Motor neuron (in vitro differentiated cells): ENCODE measurements at regions of chr14 and their contacts with region 1.

Region 1: GRCh38 chr14:104639889-104640548 is 35.4 kb upstream of the TMEM179 start:
- ATAC-seq: peak; percentile 94 to 100 (median 96)
- H3K4me3 ChIP-seq: no peak overlapping the region
- H3K27ac ChIP-seq: no peak overlapping the region
- H3K4me1 ChIP-seq: peaks cover 23 to 31% of the 10 kb centered on the region in 2 donors

Region 2: GRCh38 chr14:104078031-104078455 is 562.0 kb before region 1 on chr14:
- in situ Hi-C with region 1: loop called in 2 of 9 experiments (anchors 25 kb)
- ATAC-seq: peak; percentile 98 to 100 (median 99)
- H3K4me3 ChIP-seq: no peak overlapping the region
- H3K27ac ChIP-seq: no peak overlapping the region
- H3K4me1 ChIP-seq: no peaks in the 10 kb centered on the region

Region 3: GRCh38 chr14:104137297-104138097 is 502.5 kb before region 1 on chr14:
- in situ Hi-C with region 1: loop called in 2 of 9 experiments (anchors 25 kb)
- ATAC-seq: peak; percentile 24 to 89 (median 30)
- H3K4me3 ChIP-seq: peak overlapping the region; percentile 60 to 85 (median 66)
- H3K27ac ChIP-seq: peak overlapping the region in 1 of 2 donors; percentile 60
- H3K4me1 ChIP-seq: peaks cover 44% of the 10 kb centered on the region in 2 donors